ENCODE measurements at regions of chr9 and their contacts with region 1.

Region 1: GRCh38 chr9:116390306-116391228 is 237.0 kb downstream of the PAPPA start:
- DNase-seq: no peak
- ATAC-seq: no peak
- H3K4me3 ChIP-seq: no peak overlapping the region
- H3K27ac ChIP-seq: no peak overlapping the region
- H3K4me1 ChIP-seq: peaks cover 5 to 30% of the 10 kb centered on the region in 2 experiments; a peak in 4 of 5 replicates
- H3K27me3 ChIP-seq: no peaks in the 10 kb centered on the region
- CTCF ChIP-seq: no peak
- EP300 ChIP-seq: no peak
- POLR2A ChIP-seq: no peak
- RAD21 ChIP-seq: no peak

Region 2: GRCh38 chr9:116323571-116323970 is 67.0 kb before region 1 on chr9:
- CTCF ChIA-PET with region 1: no interaction called
- POLR2A ChIA-PET with region 1: no interaction called
- in situ Hi-C with region 1: no loop called
- intact Hi-C with region 1: no loop called
- DNase-seq: no peak
- ATAC-seq: no peak
- H3K4me3 ChIP-seq: no peak overlapping the region
- H3K27ac ChIP-seq: no peak overlapping the region
- H3K4me1 ChIP-seq: peaks cover 10 to 17% of the 10 kb centered on the region in 2 experiments; a peak in 4 of 5 replicates
- H3K27me3 ChIP-seq: no peaks in the 10 kb centered on the region
- CTCF ChIP-seq: no peak
- EP300 ChIP-seq: no peak
- POLR2A ChIP-seq: no peak
- RAD21 ChIP-seq: no peak

Region 3: GRCh38 chr9:116464987-116465571 is 74.5 kb after region 1 on chr9:
- CTCF ChIA-PET with region 1: no interaction called
- POLR2A ChIA-PET with region 1: interaction called, 8 read pairs
- in situ Hi-C with region 1: no loop called
- intact Hi-C with region 1: loop called (anchors 2 kb)
- DNase-seq: peak; percentile 65 to 97 (median 80)
- ATAC-seq: peak; percentile 79
- H3K4me3 ChIP-seq: no peak overlapping the region
- H3K27ac ChIP-seq: peak overlapping the region; percentile 95
- H3K4me1 ChIP-seq: peaks cover 23 to 79% of the 10 kb centered on the region in 2 experiments
- H3K27me3 ChIP-seq: no peaks in the 10 kb centered on the region
- CTCF ChIP-seq: no peak
- EP300 ChIP-seq: peak; percentile 100
- POLR2A ChIP-seq: no peak
- RAD21 ChIP-seq: peak; percentile 37 to 46